ENCODE measurements at regions of chr17 and their contacts with region 1.

Region 1: GRCh38 chr17:50151041-50151936 is 812 bp upstream of the PPP1R9B start:
- DNase-seq: peak; percentile 94
- CTCF ChIP-seq: peak; percentile 40

Region 2: GRCh38 chr17:50055426-50056230 is 95.7 kb before region 1 on chr17 and contains the start of gene ITGA3:
- CTCF ChIA-PET with region 1: no interaction called
- POLR2A ChIA-PET with region 1: no interaction called
- DNase-seq: peak; percentile 68
- CTCF ChIP-seq: no peak

Region 3: GRCh38 chr17:50139950-50140871 is 11.1 kb before region 1 on chr17:
- CTCF ChIA-PET with region 1: interaction called, 60 read pairs
- POLR2A ChIA-PET with region 1: interaction called, 3 read pairs
- DNase-seq: peak; percentile 87
- CTCF ChIP-seq: peak; percentile 87

Region 4: GRCh38 chr17:50189550-50190292 is 38.4 kb after region 1 on chr17:
- CTCF ChIA-PET with region 1: no interaction called
- POLR2A ChIA-PET with region 1: no interaction called
- DNase-seq: no peak
- CTCF ChIP-seq: no peak

Region 5: GRCh38 chr17:50238601-50239280 is 87.5 kb after region 1 on chr17:
- CTCF ChIA-PET with region 1: no interaction called
- POLR2A ChIA-PET with region 1: no interaction called
- DNase-seq: no peak
- CTCF ChIP-seq: no peak

Region 6: GRCh38 chr17:50283246-50283645 is 132.0 kb after region 1 on chr17:
- CTCF ChIA-PET with region 1: no interaction called
- POLR2A ChIA-PET with region 1: no interaction called
- DNase-seq: no peak
- CTCF ChIP-seq: no peak